ENCODE measurements at regions of chr14 and their contacts with region 1.

Region 1: DNA sequence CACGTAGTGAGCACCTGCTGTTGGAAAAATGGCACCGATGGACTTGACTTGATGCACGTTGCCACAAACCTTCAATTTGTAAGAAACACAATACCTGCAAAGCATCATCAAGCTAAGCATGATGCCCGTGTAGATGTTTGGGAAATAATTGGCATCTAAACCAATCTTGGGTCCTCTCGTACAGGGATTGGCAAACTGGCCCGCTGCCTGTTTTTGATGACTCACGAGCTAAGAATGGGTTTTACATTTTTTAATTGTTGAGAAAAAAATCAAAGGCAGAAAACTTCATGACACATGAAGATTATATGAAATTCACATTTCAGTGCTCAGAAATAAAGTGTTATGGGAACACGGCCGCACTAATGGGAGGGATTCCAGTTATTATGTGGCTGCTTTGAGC is 10.9 kb downstream of the MTA1 start:
- DNase-seq: no peak
- ATAC-seq: no peak
- H3K4me3 ChIP-seq: no peak overlapping the region
- H3K4me3 Mint-ChIP-seq: no peak overlapping the region
- H3K27ac ChIP-seq: no peak overlapping the region
- H3K27ac Mint-ChIP-seq: no peak overlapping the region
- H3K4me1 ChIP-seq: no peaks in the 10 kb centered on the region
- H3K4me1 Mint-ChIP-seq: peaks cover 12% of the 10 kb centered on the region
- H3K27me3 ChIP-seq: no peaks in the 10 kb centered on the region
- H3K27me3 Mint-ChIP-seq: no peaks in the 10 kb centered on the region
- CTCF ChIP-seq: no peak

Region 2: DNA sequence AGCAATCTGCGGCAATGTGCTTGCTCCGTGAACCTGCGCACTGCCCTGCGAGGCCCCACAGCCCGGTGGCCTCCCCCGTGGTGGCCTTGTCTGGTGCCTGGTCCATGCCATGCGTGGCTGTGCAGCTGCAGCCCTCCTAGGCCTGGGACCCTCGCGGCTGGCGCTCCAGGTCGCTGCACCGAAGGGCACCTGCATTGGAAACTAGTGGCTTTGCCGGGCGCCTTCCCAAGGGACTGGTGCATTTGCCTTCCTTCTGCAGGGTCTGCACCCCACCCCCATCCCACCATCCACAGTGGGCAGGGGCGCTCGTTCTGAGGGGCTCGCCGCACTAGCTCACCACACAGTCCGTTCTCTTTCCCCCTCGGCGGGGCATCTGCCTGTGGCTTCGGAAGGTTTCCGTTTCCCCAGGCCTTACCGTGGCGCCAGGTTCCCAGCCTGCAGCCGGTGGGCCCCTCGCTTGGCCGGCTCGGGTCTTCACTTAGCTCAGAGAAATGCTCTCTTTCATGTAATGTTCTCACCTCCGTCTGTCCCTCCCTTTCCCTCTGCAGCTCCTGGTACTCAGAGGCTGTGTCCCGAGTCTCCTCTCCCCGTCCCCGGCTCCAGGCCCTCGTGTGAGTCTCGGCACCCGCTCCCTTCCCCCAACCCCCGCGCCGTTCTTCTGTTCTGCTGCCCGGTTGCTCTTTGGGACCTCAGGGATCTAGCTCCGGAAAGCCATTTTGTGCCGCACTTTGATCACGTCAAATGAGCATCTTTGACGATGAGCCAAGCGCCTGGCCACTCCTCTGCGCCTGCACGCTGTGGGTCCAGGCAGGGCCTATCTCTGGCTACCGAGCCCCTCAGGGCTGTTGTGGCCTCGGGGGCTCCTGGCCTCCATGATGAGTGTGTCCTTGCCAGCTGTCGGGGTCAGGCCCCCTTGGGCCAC is 293.9 kb before region 1 on chr14:
- CTCF ChIA-PET with region 1: no interaction called
- POLR2A ChIA-PET with region 1: no interaction called
- intact Hi-C with region 1: no loop called
- DNase-seq: no peak
- ATAC-seq: no peak
- H3K4me3 ChIP-seq: no peak overlapping the region
- H3K4me3 Mint-ChIP-seq: no peak overlapping the region
- H3K27ac ChIP-seq: no peak overlapping the region
- H3K27ac Mint-ChIP-seq: no peak overlapping the region
- H3K4me1 ChIP-seq: no peaks in the 10 kb centered on the region
- H3K4me1 Mint-ChIP-seq: no peaks in the 10 kb centered on the region
- H3K27me3 ChIP-seq: peaks cover 4 to 7% of the 10 kb centered on the region in 2 experiments
- H3K27me3 Mint-ChIP-seq: peaks cover 9% of the 10 kb centered on the region
- CTCF ChIP-seq: no peak

Region 3: GRCh38 chr14:105414456-105415371 is 15.8 kb before region 1 on chr14:
- CTCF ChIA-PET with region 1: no interaction called
- POLR2A ChIA-PET with region 1: no interaction called
- intact Hi-C with region 1: no loop called
- DNase-seq: peak in 13 of 14 experiments; percentile 22 to 83 (median 50)
- ATAC-seq: peak; percentile 83
- H3K4me3 ChIP-seq: peak overlapping the region; percentile 30
- H3K4me3 Mint-ChIP-seq: peak overlapping the region; percentile 83
- H3K27ac ChIP-seq: no peak overlapping the region
- H3K27ac Mint-ChIP-seq: no peak overlapping the region
- H3K4me1 ChIP-seq: peaks cover 36% of the 10 kb centered on the region
- H3K4me1 Mint-ChIP-seq: peaks cover 23% of the 10 kb centered on the region
- H3K27me3 ChIP-seq: peaks cover 23 to 30% of the 10 kb centered on the region in 2 experiments
- H3K27me3 Mint-ChIP-seq: peaks cover 11% of the 10 kb centered on the region
- CTCF ChIP-seq: peak; percentile 82

Region 4: GRCh38 chr14:105517096-105517495 is 86.6 kb after region 1 on chr14:
- CTCF ChIA-PET with region 1: no interaction called
- POLR2A ChIA-PET with region 1: no interaction called
- intact Hi-C with region 1: loop called in 1 of 2 experiments (anchors 5 kb)
- DNase-seq: peak in 1 of 14 experiments; percentile 14
- ATAC-seq: no peak
- H3K4me3 ChIP-seq: no peak overlapping the region
- H3K4me3 Mint-ChIP-seq: no peak overlapping the region
- H3K27ac ChIP-seq: no peak overlapping the region
- H3K27ac Mint-ChIP-seq: no peak overlapping the region
- H3K4me1 ChIP-seq: no peaks in the 10 kb centered on the region
- H3K4me1 Mint-ChIP-seq: no peaks in the 10 kb centered on the region
- H3K27me3 ChIP-seq: peaks cover 11 to 21% of the 10 kb centered on the region in 2 experiments
- H3K27me3 Mint-ChIP-seq: peaks cover 56% of the 10 kb centered on the region
- CTCF ChIP-seq: no peak

Measured in CD4-positive, alpha-beta T cell (primary cell).